H1 (cell line): ENCODE measurements at regions of chr17 and their contacts with region 1.

Region 1: DNA sequence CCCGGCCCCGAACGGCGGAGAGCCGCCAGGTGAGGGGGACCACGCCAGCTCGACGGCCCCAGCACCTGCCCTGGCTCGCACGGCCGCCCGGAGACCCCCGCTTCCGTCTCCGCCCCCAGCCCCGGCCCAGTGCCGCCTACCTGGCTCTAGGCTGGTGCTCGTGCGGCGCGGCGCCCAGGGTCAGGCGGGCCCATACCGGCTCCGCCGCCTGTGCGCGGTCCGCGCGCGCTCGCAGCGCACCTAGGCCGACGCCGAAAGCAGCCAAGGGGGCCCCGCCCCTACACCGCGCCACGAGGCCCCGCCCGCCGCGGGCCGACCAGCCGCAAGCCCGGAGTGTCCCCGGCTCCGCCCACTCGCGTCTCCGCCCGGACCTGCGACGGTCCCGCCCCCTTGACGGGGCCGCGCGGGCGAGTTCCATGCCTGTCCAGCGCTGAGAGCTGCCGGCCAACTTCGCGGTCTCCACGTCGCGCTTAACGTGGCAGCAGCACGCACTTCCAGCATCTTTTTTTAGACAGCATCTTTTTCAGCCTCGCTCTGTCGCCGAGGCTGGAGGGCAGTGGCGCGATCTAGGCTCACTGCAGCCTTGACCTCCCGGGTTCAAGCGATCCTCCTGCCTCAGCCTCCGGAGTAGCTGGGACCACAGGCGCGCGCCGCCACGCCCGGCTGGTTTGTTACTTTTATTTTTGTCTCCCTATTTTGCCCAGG is at the start of gene SLC25A39:
- DNase-seq: peak in 1 of 2 experiments; percentile 98
- H3K4me3 ChIP-seq: peak within 1 kb of the TSS; percentile 74 to 92 (median 84)
- H3K27ac ChIP-seq: 0 out of 2 replicates have a peak within 1 kb of the TSS, but pooled peaks have one; percentile 29
- H3K4me1 ChIP-seq: peaks cover 0 to 11% (median 6%) of the 10 kb centered on the region in 4 experiments; a peak in 5 of 7 replicates
- H3K27me3 ChIP-seq: peaks cover 0 to 6% (median 0%) of the 10 kb centered on the region in 4 experiments; a peak in 5 of 7 replicates
- CTCF ChIP-seq: no peak
- EP300 ChIP-seq: no peak
- POLR2A ChIP-seq: peak in 1 of 2 experiments; percentile 56; a peak in 1 of 3 replicates
- RAD21 ChIP-seq: no peak; a peak in 1 of 4 replicates
- total RNA-seq, gene SLC25A39: 189 and 200 TPM in 2 replicates

Region 2: DNA sequence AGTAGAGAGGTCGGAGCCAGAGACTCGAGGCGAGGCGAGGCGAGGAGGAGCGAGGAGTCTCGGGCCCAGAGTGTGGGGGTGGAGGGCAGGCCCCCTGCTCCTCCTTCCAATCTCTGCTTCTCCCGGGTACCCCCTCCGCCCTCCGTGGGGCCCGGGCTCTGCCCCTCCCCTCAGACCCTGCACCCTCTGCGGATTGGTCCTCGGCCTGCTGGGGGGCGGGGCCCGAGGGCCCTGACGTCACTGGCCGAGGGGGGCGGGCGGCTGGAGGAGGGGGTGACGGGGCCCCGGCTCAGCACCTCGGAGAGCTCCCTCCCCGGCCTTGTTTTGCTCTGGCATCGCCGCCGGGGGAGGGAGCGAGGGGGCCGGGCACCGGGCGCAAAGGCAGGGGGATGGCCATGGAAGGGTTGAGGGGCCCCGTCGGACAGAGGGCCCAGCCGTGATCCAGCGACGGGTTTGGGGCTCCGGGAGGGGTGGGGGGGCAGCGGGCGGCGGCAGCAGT is 16.4 kb before region 1 on chr17 and contains the start of gene RUNDC3A:
- CTCF ChIA-PET with region 1: interaction called, 24 read pairs
- POLR2A ChIA-PET with region 1: interaction called, 61 read pairs
- DNase-seq: peak in 1 of 2 experiments; percentile 99
- H3K4me3 ChIP-seq: peak within 1 kb of the TSS; percentile 43 to 67 (median 54)
- H3K27ac ChIP-seq: no peak within 1 kb of the TSS
- H3K4me1 ChIP-seq: peaks cover 7 to 38% (median 26%) of the 10 kb centered on the region in 4 experiments
- H3K27me3 ChIP-seq: no peaks in the 10 kb centered on the region; a peak in 2 of 7 replicates
- CTCF ChIP-seq: no peak
- EP300 ChIP-seq: no peak
- POLR2A ChIP-seq: peak in 1 of 2 experiments; percentile 46; a peak in 1 of 3 replicates
- RAD21 ChIP-seq: no peak
- total RNA-seq, gene RUNDC3A: 6.1 and 6.4 TPM in 2 replicates

Region 3: GRCh38 chr17:44344939-44345453 is 20.3 kb after region 1 on chr17 and contains the start of gene GRN:
- CTCF ChIA-PET with region 1: interaction called, 70 read pairs
- POLR2A ChIA-PET with region 1: interaction called, 5 read pairs
- DNase-seq: peak; percentile 89 to 92
- H3K4me3 ChIP-seq: peak within 1 kb of the TSS; percentile 52 to 95 (median 78)
- H3K27ac ChIP-seq: 0 out of 2 replicates have a peak within 1 kb of the TSS, but pooled peaks have one; percentile 16
- H3K4me1 ChIP-seq: peaks cover 0 to 2% (median 0%) of the 10 kb centered on the region in 4 experiments; a peak in 3 of 7 replicates
- H3K27me3 ChIP-seq: peaks cover 0 to 3% (median 0%) of the 10 kb centered on the region in 4 experiments; a peak in 3 of 7 replicates
- CTCF ChIP-seq: no peak; a peak in 1 of 4 replicates
- EP300 ChIP-seq: peak in 1 of 2 experiments; percentile 67; a peak in 1 of 3 replicates
- POLR2A ChIP-seq: peak; percentile 76 to 86
- RAD21 ChIP-seq: no peak
- total RNA-seq, gene GRN: 108 and 117 TPM in 2 replicates

Region 4: GRCh38 chr17:44464037-44464436 is 139.3 kb after region 1 on chr17:
- CTCF ChIA-PET with region 1: no interaction called
- POLR2A ChIA-PET with region 1: no interaction called
- DNase-seq: no peak
- H3K4me3 ChIP-seq: no peak overlapping the region
- H3K27ac ChIP-seq: no peak overlapping the region
- H3K4me1 ChIP-seq: no peaks in the 10 kb centered on the region; a peak in 1 of 7 replicates
- H3K27me3 ChIP-seq: no peaks in the 10 kb centered on the region
- CTCF ChIP-seq: no peak
- EP300 ChIP-seq: no peak
- POLR2A ChIP-seq: no peak
- RAD21 ChIP-seq: no peak